Right ventricle myocardium inferior (tissue), 1 donor: ENCODE measurements at regions of chr5 and their contacts with region 1.

Region 1: DNA sequence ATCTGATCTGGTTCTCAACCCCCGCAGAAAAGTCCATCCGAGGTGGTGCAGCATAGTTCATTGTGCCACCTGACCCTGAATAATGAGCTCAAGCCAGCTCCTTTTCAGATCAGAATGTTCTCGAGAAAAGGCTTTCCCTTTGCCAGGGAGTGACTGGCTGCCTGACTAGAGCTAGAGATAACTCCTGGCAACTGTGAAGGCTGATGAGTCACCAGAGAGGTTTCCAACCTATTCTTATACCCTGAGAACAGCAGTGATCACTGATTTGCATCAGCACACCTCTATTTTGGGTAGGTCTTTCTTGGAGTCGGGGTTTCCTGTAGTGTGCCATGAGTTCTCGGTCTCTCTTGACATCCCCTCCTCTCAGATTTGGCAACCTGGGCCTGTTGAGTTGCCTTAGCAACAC is 127.9 kb downstream of the PIK3R1 start:
- DNase-seq: no peak
- ATAC-seq: peak; percentile 85

Region 2: GRCh38 chr5:68303038-68303738 is 40.2 kb before region 1 on chr5:
- intact Hi-C with region 1: loop called (anchors 5 kb)
- DNase-seq: no peak
- ATAC-seq: peak; percentile 36

Region 3: GRCh38 chr5:68995845-68996545 is 652.6 kb after region 1 on chr5:
- intact Hi-C with region 1: no loop called
- DNase-seq: no peak
- ATAC-seq: no peak